ENCODE measurements at regions of chr2 and their contacts with region 1.

Region 1: DNA sequence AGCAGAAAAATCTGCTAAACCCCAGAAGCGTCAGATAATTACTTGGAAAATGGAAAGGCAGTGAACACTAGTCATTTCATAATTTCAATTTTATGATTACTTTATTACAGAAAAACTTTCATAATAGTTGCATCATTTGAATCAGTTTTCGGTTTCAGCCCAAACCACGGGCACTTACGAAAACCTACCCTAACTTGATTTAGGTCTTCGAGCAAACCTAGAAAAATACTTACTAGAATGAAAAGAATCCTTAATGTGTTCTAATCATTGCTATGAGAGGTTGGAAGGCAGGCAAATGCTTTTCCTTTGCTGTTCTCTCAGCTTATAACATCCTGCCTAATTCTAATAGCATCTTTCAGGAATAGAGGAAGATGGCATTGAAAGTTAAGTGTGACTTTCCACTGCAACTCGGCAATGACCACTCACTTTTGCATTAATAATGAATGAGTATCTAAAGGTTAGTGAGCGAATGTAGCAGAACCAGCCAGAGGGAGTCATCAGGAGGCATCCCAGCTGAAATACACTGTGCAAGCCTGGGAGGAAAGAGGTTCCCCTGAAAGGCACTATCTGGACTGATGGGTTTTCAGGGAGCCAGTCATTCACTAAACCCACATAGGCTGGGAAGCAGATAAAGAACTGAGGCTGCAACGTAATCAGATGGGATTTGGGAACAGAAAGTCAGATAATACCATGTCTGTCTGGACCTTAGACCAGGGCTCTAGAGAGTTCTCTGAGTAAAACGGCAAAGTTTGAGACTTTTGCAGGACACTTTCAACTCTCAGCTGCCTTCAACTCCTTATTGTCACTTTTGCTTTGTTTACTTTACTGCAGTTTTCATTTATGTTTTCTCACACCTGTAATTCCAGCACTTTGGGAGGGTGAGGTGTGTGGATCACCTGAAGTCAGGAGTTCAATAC is 520.8 kb downstream of the RNF144A start:
- DNase-seq: peak; percentile 68
- ATAC-seq: peak; percentile 57
- H3K4me3 Mint-ChIP-seq: no peak overlapping the region
- H3K27ac Mint-ChIP-seq: peak overlapping the region; percentile 91
- H3K4me1 Mint-ChIP-seq: peaks cover 64% of the 10 kb centered on the region
- H3K27me3 Mint-ChIP-seq: peaks cover 1% of the 10 kb centered on the region

Region 2: GRCh38 chr2:6826081-6826913 is 611.7 kb before region 1 on chr2:
- CTCF ChIA-PET with region 1: no interaction called
- POLR2A ChIA-PET with region 1: no interaction called
- intact Hi-C with region 1: no loop called
- DNase-seq: peak; percentile 78
- ATAC-seq: peak; percentile 97
- H3K4me3 Mint-ChIP-seq: no peak overlapping the region
- H3K27ac Mint-ChIP-seq: no peak overlapping the region
- H3K4me1 Mint-ChIP-seq: peaks cover 9% of the 10 kb centered on the region
- H3K27me3 Mint-ChIP-seq: no peaks in the 10 kb centered on the region

Region 3: GRCh38 chr2:6909431-6910385 is 528.3 kb before region 1 on chr2:
- CTCF ChIA-PET with region 1: no interaction called
- POLR2A ChIA-PET with region 1: no interaction called
- intact Hi-C with region 1: loop called in 1 of 2 experiments (anchors 5 kb)
- DNase-seq: peak; percentile 62
- ATAC-seq: peak; percentile 34
- H3K4me3 Mint-ChIP-seq: peak overlapping the region; percentile 75
- H3K27ac Mint-ChIP-seq: peak overlapping the region; percentile 99
- H3K4me1 Mint-ChIP-seq: peaks cover 90% of the 10 kb centered on the region
- H3K27me3 Mint-ChIP-seq: no peaks in the 10 kb centered on the region

Region 4: DNA sequence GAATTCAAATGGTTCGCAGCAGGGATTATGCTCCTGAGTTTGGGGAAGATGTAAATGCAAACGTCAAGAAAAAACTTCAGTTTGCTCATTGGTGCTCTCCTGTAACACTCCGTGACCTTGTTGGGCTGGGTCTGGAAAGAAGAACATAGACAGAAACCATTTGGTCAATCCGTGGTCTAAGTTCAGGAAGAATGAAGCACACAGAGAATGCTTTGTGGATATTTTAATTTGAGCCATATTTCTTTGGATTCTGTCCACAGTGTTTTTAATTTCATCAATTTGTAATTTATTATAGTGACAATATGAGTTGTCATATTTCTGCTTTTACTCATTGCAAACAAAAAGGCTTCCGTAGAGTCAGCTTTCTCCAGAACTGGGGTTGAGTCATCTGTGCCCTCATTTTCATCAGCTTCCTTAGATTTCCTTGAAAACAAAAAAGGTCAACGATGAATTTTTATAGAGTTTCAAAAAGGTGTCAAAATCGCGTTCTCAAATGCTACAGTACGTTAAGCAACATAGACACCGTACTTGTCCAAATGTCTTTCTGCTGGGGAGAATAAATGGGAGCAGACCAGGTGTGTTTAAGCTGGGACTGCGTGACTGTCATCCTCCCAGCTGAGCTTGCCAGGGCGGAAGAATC is 85.6 kb after region 1 on chr2:
- CTCF ChIA-PET with region 1: no interaction called
- POLR2A ChIA-PET with region 1: no interaction called
- intact Hi-C with region 1: loop called (anchors 1 to 5 kb)
- DNase-seq: peak; percentile 27
- ATAC-seq: peak; percentile 51
- H3K4me3 Mint-ChIP-seq: peak overlapping the region; percentile 46
- H3K27ac Mint-ChIP-seq: peak overlapping the region; percentile 92
- H3K4me1 Mint-ChIP-seq: peaks cover 57% of the 10 kb centered on the region
- H3K27me3 Mint-ChIP-seq: no peaks in the 10 kb centered on the region

Region 5: GRCh38 chr2:7758073-7758759 is 320.2 kb after region 1 on chr2:
- CTCF ChIA-PET with region 1: interaction called, 4 read pairs
- POLR2A ChIA-PET with region 1: no interaction called
- intact Hi-C with region 1: loop called (anchors 5 kb)
- DNase-seq: no peak
- ATAC-seq: peak; percentile 82
- H3K4me3 Mint-ChIP-seq: no peak overlapping the region
- H3K27ac Mint-ChIP-seq: peak overlapping the region; percentile 62
- H3K4me1 Mint-ChIP-seq: peaks cover 16% of the 10 kb centered on the region
- H3K27me3 Mint-ChIP-seq: peaks cover 14% of the 10 kb centered on the region

Region 6: GRCh38 chr2:7845332-7845731 is 407.4 kb after region 1 on chr2:
- CTCF ChIA-PET with region 1: interaction called, 3 read pairs
- POLR2A ChIA-PET with region 1: no interaction called
- intact Hi-C with region 1: loop called (anchors 5 kb)
- DNase-seq: no peak
- ATAC-seq: no peak
- H3K4me3 Mint-ChIP-seq: no peak overlapping the region
- H3K27ac Mint-ChIP-seq: no peak overlapping the region
- H3K4me1 Mint-ChIP-seq: peaks cover 40% of the 10 kb centered on the region
- H3K27me3 Mint-ChIP-seq: peaks cover 6% of the 10 kb centered on the region

Region 7: GRCh38 chr2:7984693-7985353 is 546.8 kb after region 1 on chr2:
- CTCF ChIA-PET with region 1: no interaction called
- POLR2A ChIA-PET with region 1: no interaction called
- intact Hi-C with region 1: loop called in 1 of 2 experiments (anchors 5 kb)
- DNase-seq: no peak
- ATAC-seq: peak; percentile 96
- H3K4me3 Mint-ChIP-seq: peak overlapping the region; percentile 44
- H3K27ac Mint-ChIP-seq: peak overlapping the region; percentile 95
- H3K4me1 Mint-ChIP-seq: peaks cover 33% of the 10 kb centered on the region
- H3K27me3 Mint-ChIP-seq: no peaks in the 10 kb centered on the region